A673 (cell line): ENCODE measurements at regions of chrX and their contacts with region 1.

Region 1: GRCh38 chrX:135484641-135485289 is 35.7 kb upstream of the INTS6L start:
- DNase-seq: peak; percentile 65
- H3K4me3 ChIP-seq: no peak overlapping the region
- H3K27ac ChIP-seq: no peak overlapping the region
- H3K4me1 ChIP-seq: no peaks in the 10 kb centered on the region
- H3K27me3 ChIP-seq: no peaks in the 10 kb centered on the region
- CTCF ChIP-seq: peak; percentile 67

Region 2: DNA sequence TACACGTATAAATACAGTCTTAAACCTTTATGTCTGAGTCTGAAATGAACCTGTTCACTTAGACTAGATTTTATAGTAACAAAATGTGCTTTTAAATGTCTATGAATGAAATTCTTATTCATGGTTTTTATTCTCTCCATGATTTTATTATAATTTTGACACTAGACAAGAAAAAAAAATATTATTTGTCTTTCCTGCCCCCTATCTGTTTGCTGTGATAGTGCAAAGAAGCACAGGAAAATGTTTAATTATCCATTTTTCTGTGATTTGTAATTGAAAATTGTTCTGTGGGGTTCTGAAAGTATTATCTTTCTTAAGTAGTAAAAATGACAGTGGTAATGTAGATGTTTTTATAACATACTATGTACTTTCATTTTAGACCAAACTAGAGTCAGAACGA is 87.7 kb after region 1 on chrX:
- CTCF ChIA-PET with region 1: no interaction called
- POLR2A ChIA-PET with region 1: no interaction called
- intact Hi-C with region 1: loop called (anchors 5 kb)
- DNase-seq: no peak
- H3K4me3 ChIP-seq: no peak overlapping the region
- H3K27ac ChIP-seq: no peak overlapping the region
- H3K4me1 ChIP-seq: no peaks in the 10 kb centered on the region
- H3K27me3 ChIP-seq: no peaks in the 10 kb centered on the region
- CTCF ChIP-seq: peak; percentile 62

Region 3: GRCh38 chrX:135596495-135596894 is 111.7 kb after region 1 on chrX:
- CTCF ChIA-PET with region 1: no interaction called
- POLR2A ChIA-PET with region 1: no interaction called
- intact Hi-C with region 1: loop called (anchors 1 kb)
- DNase-seq: peak; percentile 61
- H3K4me3 ChIP-seq: no peak overlapping the region
- H3K27ac ChIP-seq: no peak overlapping the region
- H3K4me1 ChIP-seq: no peaks in the 10 kb centered on the region
- H3K27me3 ChIP-seq: no peaks in the 10 kb centered on the region
- CTCF ChIP-seq: peak; percentile 75

Region 4: GRCh38 chrX:135707880-135708279 is 223.1 kb after region 1 on chrX:
- CTCF ChIA-PET with region 1: no interaction called
- POLR2A ChIA-PET with region 1: no interaction called
- intact Hi-C with region 1: loop called (anchors 10 kb)
- DNase-seq: peak; percentile 61
- H3K4me3 ChIP-seq: no peak overlapping the region
- H3K27ac ChIP-seq: no peak overlapping the region
- H3K4me1 ChIP-seq: no peaks in the 10 kb centered on the region
- H3K27me3 ChIP-seq: no peaks in the 10 kb centered on the region
- CTCF ChIP-seq: peak; percentile 69

Region 5: DNA sequence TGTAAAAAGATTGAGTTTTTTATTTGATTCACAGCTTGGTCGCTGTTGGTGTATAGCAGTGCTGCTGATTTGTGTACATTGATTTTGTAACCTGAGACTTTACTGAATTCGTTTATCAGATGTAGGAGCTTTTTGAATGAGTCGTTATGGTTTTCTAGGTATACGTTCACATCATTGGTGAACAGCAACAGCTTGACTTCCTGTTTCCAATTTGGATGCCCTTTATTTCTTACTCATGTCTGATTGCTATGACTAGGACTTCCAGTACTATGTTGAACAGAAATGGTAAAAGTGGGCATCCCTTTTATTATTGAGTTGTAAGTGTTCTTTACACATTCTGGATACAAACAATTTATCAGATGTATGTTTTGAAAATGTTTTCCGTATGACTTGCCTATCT is 891.9 kb after region 1 on chrX:
- CTCF ChIA-PET with region 1: no interaction called
- POLR2A ChIA-PET with region 1: no interaction called
- intact Hi-C with region 1: no loop called
- DNase-seq: no peak
- H3K4me3 ChIP-seq: no peak overlapping the region
- H3K27ac ChIP-seq: no peak overlapping the region
- H3K4me1 ChIP-seq: no peaks in the 10 kb centered on the region
- H3K27me3 ChIP-seq: peaks cover 4% of the 10 kb centered on the region
- CTCF ChIP-seq: no peak